ENCODE measurements at regions of chr2 and their contacts with region 1.

Region 1: GRCh38 chr2:55050133-55050994 is at the start of gene RTN4:
- DNase-seq: peak; percentile 99
- ATAC-seq: peak; percentile 94 to 96
- H3K4me3 ChIP-seq: peak within 1 kb of the TSS; percentile 92
- H3K27ac ChIP-seq: peak within 1 kb of the TSS; percentile 97
- H3K4me1 ChIP-seq: no peaks in the 10 kb centered on the region
- H3K27me3 ChIP-seq: no peaks in the 10 kb centered on the region
- total RNA-seq, gene RTN4: 242 to 283 (median 249) TPM

Region 2: GRCh38 chr2:54787755-54788366 is 262.5 kb before region 1 on chr2:
- intact Hi-C with region 1: no loop called
- DNase-seq: no peak
- ATAC-seq: no peak
- H3K4me3 ChIP-seq: no peak overlapping the region
- H3K27ac ChIP-seq: no peak overlapping the region
- H3K4me1 ChIP-seq: no peaks in the 10 kb centered on the region
- H3K27me3 ChIP-seq: no peaks in the 10 kb centered on the region

Region 3: GRCh38 chr2:55010149-55010591 is 40.2 kb before region 1 on chr2:
- intact Hi-C with region 1: loop called in 1 of 4 experiments (anchors 5 kb)
- DNase-seq: peak in 2 of 3 donors; percentile 23 to 49
- ATAC-seq: peak; percentile 91 to 93
- H3K4me3 ChIP-seq: peak overlapping the region; percentile 29
- H3K27ac ChIP-seq: no peak overlapping the region
- H3K4me1 ChIP-seq: peaks cover 6% of the 10 kb centered on the region
- H3K27me3 ChIP-seq: no peaks in the 10 kb centered on the region

Region 4: DNA sequence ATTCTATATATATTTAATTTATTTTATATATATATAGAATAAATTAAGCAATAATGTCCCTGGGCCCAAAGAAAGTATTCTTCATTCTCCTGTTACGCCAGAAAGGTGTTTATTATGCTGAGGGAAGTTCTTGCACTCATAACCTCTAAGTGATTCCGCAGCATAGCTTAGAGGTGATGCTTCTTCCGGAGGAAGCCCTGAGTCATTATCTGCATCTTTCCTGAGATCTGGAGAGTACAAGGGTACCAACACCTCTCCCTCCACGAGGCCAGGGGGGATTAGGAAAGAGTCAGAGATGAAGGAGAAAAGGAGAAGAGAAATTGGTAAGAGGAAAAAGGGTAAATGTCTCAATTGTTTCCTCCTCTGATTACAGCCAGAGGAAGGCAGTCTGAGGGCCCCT is 43.0 kb after region 1 on chr2:
- intact Hi-C with region 1: loop called in 1 of 4 experiments (anchors 5 kb)
- DNase-seq: no peak
- ATAC-seq: no peak
- H3K4me3 ChIP-seq: no peak overlapping the region
- H3K27ac ChIP-seq: no peak overlapping the region
- H3K4me1 ChIP-seq: peaks cover 6% of the 10 kb centered on the region
- H3K27me3 ChIP-seq: no peaks in the 10 kb centered on the region

Region 5: DNA sequence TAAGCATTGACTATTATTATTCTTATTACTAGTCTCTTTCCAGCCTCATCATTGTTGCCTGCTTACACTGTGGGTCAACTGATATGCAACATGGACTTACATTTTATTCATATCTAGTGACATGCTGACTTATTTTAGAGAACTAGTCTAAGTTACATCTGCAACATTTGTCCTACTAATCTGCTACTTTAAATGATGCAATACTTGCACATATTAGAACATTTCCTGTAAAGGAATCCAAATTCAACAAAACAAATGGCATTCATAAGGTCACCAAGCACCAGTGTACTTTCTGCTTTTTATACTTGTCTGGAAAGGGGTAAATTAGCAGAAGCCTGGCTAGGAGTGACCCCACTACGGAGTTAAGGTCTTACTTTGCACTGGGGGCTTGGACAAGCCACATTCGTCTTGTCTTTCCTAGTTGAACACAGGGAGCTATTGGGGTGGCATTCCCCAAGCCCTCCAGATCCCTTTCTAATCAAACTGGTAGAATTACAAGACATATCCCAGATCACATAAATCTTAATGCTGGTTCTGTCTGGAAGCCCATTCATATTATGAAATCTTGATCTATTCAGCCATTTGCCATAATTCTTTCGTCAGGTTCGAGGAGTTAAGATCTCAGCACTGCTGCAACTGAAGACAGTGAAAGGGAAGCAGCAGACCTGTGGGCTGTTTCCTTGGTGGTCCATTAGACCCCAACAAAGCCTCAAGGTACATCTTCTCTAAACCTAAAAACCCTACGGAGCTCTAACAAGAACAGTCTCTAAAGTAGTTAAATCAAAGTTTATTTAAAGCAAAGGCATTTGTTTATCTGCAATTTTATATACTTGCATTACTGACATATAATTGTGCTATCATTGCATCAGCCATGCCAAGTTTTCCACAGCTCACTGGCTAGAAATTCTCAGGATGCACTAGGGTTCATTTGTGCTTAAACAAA is 49.8 kb after region 1 on chr2:
- intact Hi-C with region 1: loop called in 1 of 4 experiments (anchors 5 kb)
- DNase-seq: no peak
- ATAC-seq: peak; percentile 71 to 80
- H3K4me3 ChIP-seq: no peak overlapping the region
- H3K27ac ChIP-seq: peak overlapping the region; percentile 62
- H3K4me1 ChIP-seq: peaks cover 11% of the 10 kb centered on the region
- H3K27me3 ChIP-seq: no peaks in the 10 kb centered on the region

Region 6: GRCh38 chr2:55163274-55163721 is 112.9 kb after region 1 on chr2:
- intact Hi-C with region 1: loop called in 3 of 4 experiments (anchors 5 to 10 kb)
- DNase-seq: no peak
- ATAC-seq: no peak
- H3K4me3 ChIP-seq: no peak overlapping the region
- H3K27ac ChIP-seq: no peak overlapping the region
- H3K4me1 ChIP-seq: peaks cover 16% of the 10 kb centered on the region
- H3K27me3 ChIP-seq: no peaks in the 10 kb centered on the region

Region 7: GRCh38 chr2:55168221-55169154 is 118.1 kb after region 1 on chr2:
- intact Hi-C with region 1: loop called in 3 of 4 experiments (anchors 5 to 10 kb)
- DNase-seq: peak in 2 of 3 donors; percentile 49 to 73
- ATAC-seq: peak; percentile 71 to 75
- H3K4me3 ChIP-seq: no peak overlapping the region
- H3K27ac ChIP-seq: peak overlapping the region; percentile 8
- H3K4me1 ChIP-seq: peaks cover 8% of the 10 kb centered on the region
- H3K27me3 ChIP-seq: no peaks in the 10 kb centered on the region

Measured in right cardiac atrium (tissue), 5 donors.